ENCODE measurements at regions of chr6 and their contacts with region 1.

Region 1: DNA sequence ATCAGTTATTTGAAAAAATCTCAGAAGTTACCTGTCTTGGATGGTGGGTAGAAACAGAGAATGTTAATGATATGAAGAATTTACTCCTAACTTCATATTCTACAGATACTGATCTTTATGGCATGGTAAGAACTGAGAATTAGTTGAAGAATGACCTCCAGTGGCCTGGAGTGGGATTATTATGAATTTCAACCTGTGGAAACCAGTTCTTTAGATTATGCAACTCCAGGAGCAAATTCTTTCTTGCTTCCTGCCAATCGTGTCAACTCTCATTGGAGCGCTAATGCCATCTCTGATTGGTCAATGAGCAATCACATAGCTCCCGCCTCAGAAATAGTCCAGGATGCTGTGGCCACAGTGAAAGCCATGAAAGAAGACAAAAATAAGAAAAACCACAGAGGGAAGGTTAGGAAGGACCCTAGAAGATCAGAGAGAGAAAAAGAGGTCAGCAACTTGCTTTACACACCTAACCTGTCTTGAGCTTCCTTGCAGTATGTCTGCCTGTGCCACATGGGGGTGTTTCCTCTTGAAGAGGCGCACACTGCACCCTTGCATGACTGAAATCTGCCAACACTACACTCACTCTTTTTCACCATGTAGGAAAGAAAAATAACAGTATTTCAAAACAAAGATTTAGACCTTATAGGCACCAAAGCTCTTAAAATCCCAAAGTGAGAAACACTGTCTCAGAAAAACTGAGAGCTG is 40.4 kb downstream of the LYRM2 start:
- DNase-seq: no peak
- ATAC-seq: no peak
- H3K4me3 Mint-ChIP-seq: no peak overlapping the region
- H3K27ac Mint-ChIP-seq: peak overlapping the region; percentile 18
- H3K4me1 Mint-ChIP-seq: peaks cover 31% of the 10 kb centered on the region
- H3K27me3 Mint-ChIP-seq: no peaks in the 10 kb centered on the region
- CTCF ChIP-seq: no peak

Region 2: GRCh38 chr6:89610149-89610642 is 12.1 kb after region 1 on chr6:
- CTCF ChIA-PET with region 1: interaction called, 11 read pairs
- POLR2A ChIA-PET with region 1: no interaction called
- intact Hi-C with region 1: no loop called
- DNase-seq: peak; percentile 90
- ATAC-seq: peak; percentile 95
- H3K4me3 Mint-ChIP-seq: no peak overlapping the region
- H3K27ac Mint-ChIP-seq: no peak overlapping the region
- H3K4me1 Mint-ChIP-seq: peaks cover 5% of the 10 kb centered on the region
- H3K27me3 Mint-ChIP-seq: no peaks in the 10 kb centered on the region
- CTCF ChIP-seq: peak; percentile 94